ENCODE measurements at regions of chr7 and their contacts with region 1.

Region 1: GRCh38 chr7:49255054-49255453 is 330.7 kb downstream of the CDC14C start:
- DNase-seq: no peak
- ATAC-seq: no peak
- H3K4me3 ChIP-seq: no peak overlapping the region
- H3K27ac ChIP-seq: no peak overlapping the region
- H3K4me1 ChIP-seq: no peaks in the 10 kb centered on the region
- H3K27me3 ChIP-seq: no peaks in the 10 kb centered on the region
- CTCF ChIP-seq: no peak
- POLR2A ChIP-seq: no peak

Region 2: GRCh38 chr7:48899932-48900331 is 355.1 kb before region 1 on chr7:
- intact Hi-C with region 1: no loop called
- DNase-seq: no peak
- ATAC-seq: no peak
- H3K4me3 ChIP-seq: no peak overlapping the region
- H3K27ac ChIP-seq: no peak overlapping the region
- H3K4me1 ChIP-seq: peaks cover 0 to 4% (median 0%) of the 10 kb centered on the region in 12 donors
- H3K27me3 ChIP-seq: no peaks in the 10 kb centered on the region
- CTCF ChIP-seq: no peak
- POLR2A ChIP-seq: no peak

Region 3: DNA sequence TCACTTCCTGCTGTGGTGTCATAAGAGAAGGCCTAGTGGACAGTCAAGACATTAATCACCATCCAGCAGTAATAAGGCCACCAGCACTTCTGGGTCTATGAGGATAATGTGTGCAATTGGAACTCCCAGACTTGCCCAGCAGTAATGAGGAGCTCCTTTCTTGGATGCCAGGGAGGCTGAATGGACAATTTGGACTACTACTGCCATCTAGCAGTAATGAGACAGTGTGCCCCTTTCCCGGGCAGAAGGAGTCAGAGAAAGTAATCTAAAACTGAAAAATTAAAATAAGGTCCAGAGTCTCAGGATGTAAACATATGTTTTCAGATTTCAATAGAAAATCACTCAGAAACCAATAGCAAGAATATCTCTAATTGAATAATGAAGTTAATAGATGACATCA is 69.7 kb after region 1 on chr7:
- intact Hi-C with region 1: loop called in 1 of 10 experiments (anchors 10 kb)
- DNase-seq: no peak
- ATAC-seq: no peak
- H3K4me3 ChIP-seq: no peak overlapping the region
- H3K27ac ChIP-seq: no peak overlapping the region
- H3K4me1 ChIP-seq: peaks cover 0 to 4% (median 0%) of the 10 kb centered on the region in 12 donors
- H3K27me3 ChIP-seq: no peaks in the 10 kb centered on the region
- CTCF ChIP-seq: no peak
- POLR2A ChIP-seq: no peak

Measured in heart left ventricle (tissue), 16 donors.